A673 (cell line): ENCODE measurements at regions of chr13 and their contacts with region 1.

Region 1: GRCh38 chr13:93577105-93577504 is 350.5 kb downstream of the GPC6 start:
- DNase-seq: no peak
- H3K4me3 ChIP-seq: no peak overlapping the region
- H3K27ac ChIP-seq: no peak overlapping the region
- H3K4me1 ChIP-seq: no peaks in the 10 kb centered on the region
- H3K27me3 ChIP-seq: no peaks in the 10 kb centered on the region
- CTCF ChIP-seq: no peak

Region 2: DNA sequence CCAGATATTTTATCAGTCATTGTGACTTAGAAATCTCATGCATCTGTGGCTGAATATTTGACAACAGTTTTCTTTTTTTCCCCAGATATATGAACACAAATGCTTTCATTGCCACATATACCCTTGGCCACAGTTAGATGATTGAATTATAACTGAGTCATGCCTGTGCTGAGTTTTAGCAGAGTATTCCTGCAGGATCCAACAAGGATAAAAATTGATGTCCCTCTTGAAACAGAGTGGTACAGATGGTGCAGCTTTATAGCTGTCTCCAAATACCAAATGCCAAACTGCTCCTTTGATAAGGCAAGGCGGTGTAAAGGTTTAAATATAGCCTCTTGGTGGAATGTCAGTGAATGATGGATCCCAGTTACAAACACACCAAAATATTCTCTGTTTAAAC is 78.0 kb after region 1 on chr13:
- CTCF ChIA-PET with region 1: no interaction called
- POLR2A ChIA-PET with region 1: no interaction called
- intact Hi-C with region 1: loop called (anchors 1 kb)
- DNase-seq: no peak
- H3K4me3 ChIP-seq: no peak overlapping the region
- H3K27ac ChIP-seq: no peak overlapping the region
- H3K4me1 ChIP-seq: no peaks in the 10 kb centered on the region
- H3K27me3 ChIP-seq: no peaks in the 10 kb centered on the region
- CTCF ChIP-seq: no peak

Region 3: GRCh38 chr13:93926425-93926824 is 349.3 kb after region 1 on chr13:
- CTCF ChIA-PET with region 1: no interaction called
- POLR2A ChIA-PET with region 1: no interaction called
- intact Hi-C with region 1: no loop called
- DNase-seq: no peak
- H3K4me3 ChIP-seq: no peak overlapping the region
- H3K27ac ChIP-seq: no peak overlapping the region
- H3K4me1 ChIP-seq: peaks cover 21% of the 10 kb centered on the region
- H3K27me3 ChIP-seq: no peaks in the 10 kb centered on the region
- CTCF ChIP-seq: no peak